IMR-90 (cell line): ENCODE measurements at regions of chr18 and their contacts with region 1.

Region 1: DNA sequence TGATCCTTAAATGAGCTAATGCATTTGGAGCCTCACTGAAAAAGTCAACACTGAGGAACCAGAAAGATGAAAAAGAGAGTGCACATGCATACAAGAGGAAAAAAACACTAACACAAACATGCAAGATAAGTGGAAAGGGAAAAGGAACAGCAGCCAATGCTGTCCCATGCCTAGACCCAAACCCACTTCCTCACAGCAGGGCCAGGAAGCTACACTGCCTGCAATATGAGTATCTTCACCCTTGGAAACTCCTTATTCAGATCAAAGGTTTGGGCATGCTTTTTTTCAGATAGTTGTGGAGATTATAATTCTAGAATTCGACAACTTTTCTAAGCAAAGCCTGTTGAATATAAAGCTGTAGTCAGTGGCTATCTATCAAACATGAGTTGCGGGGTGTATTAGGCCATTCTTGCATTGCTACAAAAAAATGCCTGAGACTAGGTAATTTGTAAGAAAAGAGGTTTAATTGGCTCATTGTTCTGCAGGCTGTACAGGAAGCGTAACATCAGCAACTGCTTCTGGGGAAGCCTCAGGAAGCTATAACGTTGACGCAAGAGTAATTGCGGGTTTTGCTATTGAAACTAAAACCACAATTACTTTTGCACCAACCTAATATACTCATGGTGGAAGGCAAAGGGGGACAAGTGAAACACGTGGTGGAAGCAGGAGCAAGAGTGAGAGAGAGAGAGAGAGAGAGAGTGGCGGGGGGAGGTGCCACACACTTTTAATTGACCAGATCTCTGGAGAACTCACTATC is 138.2 kb downstream of the MBD2 start:
- DNase-seq: no peak
- ATAC-seq: no peak
- H3K4me3 ChIP-seq: no peak overlapping the region
- H3K27ac ChIP-seq: no peak overlapping the region
- H3K4me1 ChIP-seq: no peaks in the 10 kb centered on the region
- H3K27me3 ChIP-seq: no peaks in the 10 kb centered on the region
- CTCF ChIP-seq: no peak
- POLR2A ChIP-seq: no peak
- RAD21 ChIP-seq: no peak

Region 2: GRCh38 chr18:53817976-53818950 is 268.0 kb before region 1 on chr18:
- CTCF ChIA-PET with region 1: no interaction called
- POLR2A ChIA-PET with region 1: no interaction called
- dilution Hi-C with region 1: no loop called
- in situ Hi-C with region 1: no loop called
- intact Hi-C with region 1: no loop called
- DNase-seq: no peak
- ATAC-seq: no peak
- H3K4me3 ChIP-seq: no peak overlapping the region
- H3K27ac ChIP-seq: no peak overlapping the region
- H3K4me1 ChIP-seq: no peaks in the 10 kb centered on the region
- H3K27me3 ChIP-seq: no peaks in the 10 kb centered on the region
- CTCF ChIP-seq: no peak
- POLR2A ChIP-seq: no peak
- RAD21 ChIP-seq: no peak

Region 3: DNA sequence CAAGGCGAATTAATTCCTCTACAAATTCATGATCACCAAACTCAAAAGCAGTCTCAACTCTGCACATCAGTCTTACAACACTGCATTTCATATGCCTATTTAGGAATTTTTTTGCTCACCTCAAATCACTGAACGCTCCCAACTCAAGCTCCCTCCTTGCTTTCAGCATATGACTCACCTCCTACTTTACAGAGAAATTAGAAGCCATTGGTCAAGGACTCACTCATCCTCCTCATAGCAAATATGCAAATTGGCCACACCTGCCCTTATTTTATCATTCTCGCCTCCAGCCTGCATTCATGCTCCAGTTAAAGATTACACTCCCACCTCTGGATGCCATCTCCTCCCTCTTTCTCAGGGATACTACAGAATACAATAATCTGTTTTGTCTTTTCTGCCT is 10.5 kb before region 1 on chr18:
- CTCF ChIA-PET with region 1: no interaction called
- POLR2A ChIA-PET with region 1: interaction called, 11 read pairs
- dilution Hi-C with region 1: no loop called
- in situ Hi-C with region 1: no loop called
- intact Hi-C with region 1: no loop called
- DNase-seq: no peak
- ATAC-seq: no peak
- H3K4me3 ChIP-seq: no peak overlapping the region
- H3K27ac ChIP-seq: no peak overlapping the region
- H3K4me1 ChIP-seq: no peaks in the 10 kb centered on the region
- H3K27me3 ChIP-seq: no peaks in the 10 kb centered on the region
- CTCF ChIP-seq: no peak
- POLR2A ChIP-seq: no peak
- RAD21 ChIP-seq: no peak